Astrocyte of the cerebellum (primary cell): ENCODE measurements at regions of chr2 and their contacts with region 1.

Region 1: DNA sequence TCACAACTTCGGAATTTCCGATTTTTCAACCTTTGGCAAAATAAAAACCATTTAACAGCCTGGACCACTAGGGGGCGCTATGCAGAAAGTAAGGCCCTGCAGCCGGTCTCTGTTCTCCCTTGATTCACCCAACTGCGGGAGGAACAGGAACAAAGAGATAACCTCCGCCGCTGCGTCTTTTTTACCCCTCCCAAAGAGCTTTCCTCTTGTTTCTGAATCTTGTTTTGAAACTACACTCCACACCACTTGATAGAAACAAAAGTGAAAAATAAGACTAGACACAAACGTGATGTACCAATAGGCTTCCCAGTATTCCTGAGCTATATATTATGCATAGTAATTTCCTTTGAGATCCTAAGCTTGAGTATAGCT is 231.2 kb downstream of the MYO3B start:
- DNase-seq: peak; percentile 49
- H3K4me3 ChIP-seq: no peak overlapping the region
- CTCF ChIP-seq: peak; percentile 80

Region 2: DNA sequence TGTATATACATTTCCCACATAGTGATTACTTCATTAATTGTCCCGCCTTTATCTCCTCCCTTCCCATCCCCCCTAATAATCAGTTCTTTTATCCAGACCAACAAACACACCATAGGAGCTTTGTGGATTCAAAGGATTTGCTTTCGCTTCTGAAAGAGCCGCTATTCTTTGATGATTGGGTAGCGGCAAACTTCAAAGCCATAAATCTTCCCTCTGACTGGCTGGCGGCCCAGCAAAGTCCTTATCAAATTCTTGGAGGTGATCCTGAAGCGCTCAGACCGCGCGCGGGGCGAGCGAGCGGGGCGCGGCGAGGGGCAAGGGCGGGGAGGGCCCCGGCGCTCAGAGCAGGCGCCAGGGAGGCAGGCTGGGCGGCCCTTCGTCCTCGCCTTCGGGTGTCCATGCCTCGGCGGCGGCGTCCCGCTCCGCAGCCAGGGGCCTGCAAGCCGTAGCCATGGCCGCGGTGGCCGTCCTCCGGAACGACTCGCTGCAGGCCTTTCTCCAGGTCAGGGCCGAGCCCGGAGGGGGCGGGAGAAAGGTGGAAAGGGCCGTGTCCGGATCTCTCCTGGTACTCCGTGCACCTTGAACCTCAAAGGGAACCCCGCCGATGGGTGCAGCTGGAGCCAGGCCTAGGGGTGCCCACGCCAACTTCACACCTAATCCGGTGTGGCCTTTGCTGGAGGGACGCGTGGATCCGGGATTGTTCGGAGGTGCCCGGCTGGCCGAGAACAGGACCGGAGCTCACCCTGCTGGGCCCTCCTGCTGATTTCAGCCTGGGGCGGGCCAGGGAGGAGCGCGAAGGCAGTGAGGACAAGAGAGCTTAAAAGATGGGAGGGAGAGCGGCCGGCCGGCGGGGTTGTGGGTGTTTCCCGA is 306.1 kb after region 1 on chr2 and contains the start of gene SP5:
- in situ Hi-C with region 1: loop called (anchors 25 kb)
- DNase-seq: peak; percentile 39
- H3K4me3 ChIP-seq: peak within 1 kb of the TSS; percentile 37
- CTCF ChIP-seq: no peak

Region 3: DNA sequence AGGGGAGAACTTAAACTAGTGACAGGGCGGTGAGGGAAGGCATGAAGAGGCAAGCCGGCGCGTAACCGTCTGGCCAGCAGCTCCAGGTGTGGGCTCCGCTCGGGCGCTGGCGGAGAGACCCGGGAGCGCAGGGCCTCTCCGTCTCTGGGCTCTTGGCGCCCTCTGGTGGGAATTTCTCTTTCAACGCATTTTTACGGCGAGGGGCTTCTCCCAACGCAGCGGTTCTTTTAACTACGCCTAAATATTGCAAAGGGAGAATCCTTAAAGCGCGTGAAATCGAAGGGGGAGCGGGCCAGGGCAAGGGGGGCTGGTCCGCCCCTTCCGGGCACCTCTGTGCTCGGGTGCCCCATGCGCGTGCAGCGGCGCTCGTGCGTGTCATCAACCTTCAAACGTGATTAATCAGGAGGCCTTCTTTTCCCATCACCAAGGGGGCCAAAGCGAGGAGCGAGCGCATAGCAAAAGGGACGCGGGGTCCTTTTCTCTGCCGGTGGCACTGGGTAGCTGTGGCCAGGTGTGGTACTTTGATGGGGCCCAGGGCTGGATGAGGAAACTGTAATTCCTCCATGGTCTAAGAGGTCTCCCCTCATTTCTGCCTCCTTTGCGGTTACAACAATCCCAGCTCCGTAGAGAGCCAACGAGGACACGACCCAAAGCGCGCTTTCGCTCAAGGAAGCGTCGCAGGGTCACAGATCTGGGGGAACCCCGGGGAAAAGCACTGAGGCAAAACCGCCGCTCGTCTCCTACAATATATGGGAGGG is 406.8 kb after region 1 on chr2:
- in situ Hi-C with region 1: loop called (anchors 25 kb)
- DNase-seq: peak; percentile 24
- H3K4me3 ChIP-seq: peak overlapping the region; percentile 39
- CTCF ChIP-seq: peak; percentile 74